CD8-positive, alpha-beta T cell (primary cell): ENCODE measurements at regions of chr20 and their contacts with region 1.

Region 1: DNA sequence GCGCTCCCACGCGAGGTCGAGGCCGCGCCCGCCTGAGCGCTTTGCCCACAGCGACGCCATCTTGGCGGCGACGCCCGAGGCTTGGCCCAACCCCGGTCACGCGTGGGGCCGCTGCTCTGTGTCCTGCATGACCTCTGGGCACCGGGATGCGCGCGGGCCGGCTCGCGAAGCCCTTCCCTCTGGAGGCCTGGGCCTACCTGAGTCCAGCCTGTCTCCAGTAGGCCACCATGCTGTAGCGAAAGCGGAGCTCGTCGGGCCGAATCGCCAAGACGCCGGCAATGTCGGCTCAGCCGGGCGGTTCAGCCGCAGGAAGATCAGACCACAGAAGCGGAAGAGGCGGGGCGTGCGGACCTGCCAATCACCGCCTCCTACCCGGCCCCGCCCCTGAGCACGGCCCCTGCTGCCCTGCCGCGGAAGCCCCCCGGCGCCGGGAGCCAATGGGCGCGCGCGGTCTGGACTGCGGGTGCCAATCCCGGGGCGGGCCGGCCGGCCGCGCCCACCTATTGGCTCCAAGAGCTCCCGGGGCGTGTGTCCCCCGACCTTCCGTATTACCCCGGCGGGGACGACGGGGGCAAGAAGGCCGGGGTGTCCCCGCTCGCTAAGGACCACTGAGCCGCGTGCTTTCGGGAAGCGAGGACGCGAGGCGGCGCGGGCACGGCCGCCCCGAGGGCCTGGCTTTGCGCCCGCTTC is at the start of gene ATP5F1E:
- DNase-seq: peak; percentile 95 to 99 (median 98)
- ATAC-seq: peak; percentile 97
- H3K4me3 ChIP-seq: peak within 1 kb of the TSS; percentile 75 to 89
- H3K4me3 Mint-ChIP-seq: peak within 1 kb of the TSS; percentile 95
- H3K27ac ChIP-seq: peak within 1 kb of the TSS; percentile 67 to 79
- H3K27ac Mint-ChIP-seq: peak within 1 kb of the TSS; percentile 95
- H3K4me1 ChIP-seq: peaks cover 56% of the 10 kb centered on the region
- H3K4me1 Mint-ChIP-seq: peaks cover 60% of the 10 kb centered on the region
- H3K27me3 ChIP-seq: no peaks in the 10 kb centered on the region
- H3K27me3 Mint-ChIP-seq: no peaks in the 10 kb centered on the region
- CTCF ChIP-seq: no peak
- total RNA-seq, gene ATP5F1E: 50.4 to 52.2 TPM

Region 2: DNA sequence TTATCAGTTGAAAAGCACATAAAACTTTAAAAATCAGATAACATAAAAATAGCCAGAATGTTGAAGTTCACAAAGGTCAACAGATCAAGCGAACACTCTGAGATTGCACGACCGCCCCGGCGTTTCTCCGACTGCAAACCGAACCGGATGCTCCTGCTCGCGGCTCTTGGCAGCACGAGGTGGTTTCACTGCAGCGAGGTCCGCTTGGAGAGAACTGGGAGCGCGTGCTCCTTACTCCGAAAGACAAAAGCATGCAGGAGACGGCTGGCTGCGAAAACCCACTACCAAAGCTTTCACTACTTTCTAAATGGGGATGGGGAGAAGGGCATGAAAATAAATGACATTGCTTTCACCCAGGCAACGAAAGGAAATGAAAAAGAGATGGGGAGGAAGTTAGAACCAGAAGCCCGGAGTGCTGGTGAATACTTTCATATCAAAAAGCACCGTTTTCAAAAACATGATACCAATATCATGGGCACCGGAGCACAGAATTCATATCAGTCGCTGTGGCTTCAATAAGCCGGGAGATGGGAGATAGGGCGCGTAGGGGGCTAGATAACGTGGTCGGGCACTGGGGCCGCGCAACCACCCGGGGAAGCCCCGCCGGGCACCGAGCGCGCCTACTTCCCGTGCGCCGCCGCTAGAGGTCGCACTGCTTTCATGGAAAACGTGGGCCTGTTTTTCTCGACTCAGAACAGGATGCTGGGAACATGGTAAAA is 795.4 kb before region 1 on chr20:
- CTCF ChIA-PET with region 1: no interaction called
- POLR2A ChIA-PET with region 1: no interaction called
- intact Hi-C with region 1: loop called in 1 of 2 experiments (anchors 10 kb)
- DNase-seq: peak; percentile 70 to 91 (median 82)
- ATAC-seq: peak; percentile 87
- H3K4me3 ChIP-seq: peak overlapping the region; percentile 53 to 85
- H3K4me3 Mint-ChIP-seq: peak overlapping the region; percentile 86
- H3K27ac ChIP-seq: peak overlapping the region; percentile 56 to 73
- H3K27ac Mint-ChIP-seq: peak overlapping the region; percentile 89
- H3K4me1 ChIP-seq: peaks cover 7% of the 10 kb centered on the region
- H3K4me1 Mint-ChIP-seq: peaks cover 19% of the 10 kb centered on the region
- H3K27me3 ChIP-seq: no peaks in the 10 kb centered on the region
- H3K27me3 Mint-ChIP-seq: no peaks in the 10 kb centered on the region
- CTCF ChIP-seq: peak; percentile 96

Region 3: GRCh38 chr20:58388882-58389323 is 643.3 kb before region 1 on chr20 and contains the start of gene VAPB:
- CTCF ChIA-PET with region 1: no interaction called
- POLR2A ChIA-PET with region 1: no interaction called
- intact Hi-C with region 1: loop called (anchors 1 to 5 kb)
- DNase-seq: peak; percentile 94 to 99 (median 97)
- ATAC-seq: peak; percentile 95
- H3K4me3 ChIP-seq: peak within 1 kb of the TSS; percentile 87 to 90
- H3K4me3 Mint-ChIP-seq: peak within 1 kb of the TSS; percentile 88
- H3K27ac ChIP-seq: peak within 1 kb of the TSS; percentile 98 to 99
- H3K27ac Mint-ChIP-seq: peak within 1 kb of the TSS; percentile 96
- H3K4me1 ChIP-seq: peaks cover 43% of the 10 kb centered on the region
- H3K4me1 Mint-ChIP-seq: peaks cover 40% of the 10 kb centered on the region
- H3K27me3 ChIP-seq: peaks cover 0 to 2% of the 10 kb centered on the region in 2 experiments
- H3K27me3 Mint-ChIP-seq: peaks cover 4% of the 10 kb centered on the region
- CTCF ChIP-seq: no peak
- total RNA-seq, gene VAPB: 29.3 to 32.3 TPM

Region 4: GRCh38 chr20:58778760-58779159 is 253.4 kb before region 1 on chr20:
- CTCF ChIA-PET with region 1: no interaction called
- POLR2A ChIA-PET with region 1: no interaction called
- intact Hi-C with region 1: no loop called
- DNase-seq: no peak
- ATAC-seq: no peak
- H3K4me3 ChIP-seq: no peak overlapping the region
- H3K4me3 Mint-ChIP-seq: no peak overlapping the region
- H3K27ac ChIP-seq: no peak overlapping the region
- H3K27ac Mint-ChIP-seq: no peak overlapping the region
- H3K4me1 ChIP-seq: no peaks in the 10 kb centered on the region
- H3K4me1 Mint-ChIP-seq: no peaks in the 10 kb centered on the region
- H3K27me3 ChIP-seq: no peaks in the 10 kb centered on the region
- H3K27me3 Mint-ChIP-seq: peaks cover 5% of the 10 kb centered on the region
- CTCF ChIP-seq: no peak

Region 5: GRCh38 chr20:58864350-58864749 is 167.8 kb before region 1 on chr20:
- CTCF ChIA-PET with region 1: no interaction called
- POLR2A ChIA-PET with region 1: no interaction called
- intact Hi-C with region 1: no loop called
- DNase-seq: peak in 2 of 9 experiments; percentile 43 to 58
- ATAC-seq: peak; percentile 49
- H3K4me3 ChIP-seq: no peak overlapping the region
- H3K4me3 Mint-ChIP-seq: no peak overlapping the region
- H3K27ac ChIP-seq: no peak overlapping the region
- H3K27ac Mint-ChIP-seq: no peak overlapping the region
- H3K4me1 ChIP-seq: no peaks in the 10 kb centered on the region
- H3K4me1 Mint-ChIP-seq: no peaks in the 10 kb centered on the region
- H3K27me3 ChIP-seq: no peaks in the 10 kb centered on the region
- H3K27me3 Mint-ChIP-seq: peaks cover 18% of the 10 kb centered on the region
- CTCF ChIP-seq: peak; percentile 53

Region 6: GRCh38 chr20:58907399-58908137 is 124.6 kb before region 1 on chr20:
- CTCF ChIA-PET with region 1: no interaction called
- POLR2A ChIA-PET with region 1: interaction called, 12 read pairs
- intact Hi-C with region 1: no loop called
- DNase-seq: peak; percentile 26 to 90 (median 55)
- ATAC-seq: peak; percentile 48
- H3K4me3 ChIP-seq: peak overlapping the region in 1 of 2 experiments; percentile 2
- H3K4me3 Mint-ChIP-seq: peak overlapping the region; percentile 71
- H3K27ac ChIP-seq: peak overlapping the region; percentile 1 to 58
- H3K27ac Mint-ChIP-seq: peak overlapping the region; percentile 84
- H3K4me1 ChIP-seq: peaks cover 38% of the 10 kb centered on the region
- H3K4me1 Mint-ChIP-seq: peaks cover 72% of the 10 kb centered on the region
- H3K27me3 ChIP-seq: no peaks in the 10 kb centered on the region
- H3K27me3 Mint-ChIP-seq: no peaks in the 10 kb centered on the region
- CTCF ChIP-seq: no peak

Region 7: DNA sequence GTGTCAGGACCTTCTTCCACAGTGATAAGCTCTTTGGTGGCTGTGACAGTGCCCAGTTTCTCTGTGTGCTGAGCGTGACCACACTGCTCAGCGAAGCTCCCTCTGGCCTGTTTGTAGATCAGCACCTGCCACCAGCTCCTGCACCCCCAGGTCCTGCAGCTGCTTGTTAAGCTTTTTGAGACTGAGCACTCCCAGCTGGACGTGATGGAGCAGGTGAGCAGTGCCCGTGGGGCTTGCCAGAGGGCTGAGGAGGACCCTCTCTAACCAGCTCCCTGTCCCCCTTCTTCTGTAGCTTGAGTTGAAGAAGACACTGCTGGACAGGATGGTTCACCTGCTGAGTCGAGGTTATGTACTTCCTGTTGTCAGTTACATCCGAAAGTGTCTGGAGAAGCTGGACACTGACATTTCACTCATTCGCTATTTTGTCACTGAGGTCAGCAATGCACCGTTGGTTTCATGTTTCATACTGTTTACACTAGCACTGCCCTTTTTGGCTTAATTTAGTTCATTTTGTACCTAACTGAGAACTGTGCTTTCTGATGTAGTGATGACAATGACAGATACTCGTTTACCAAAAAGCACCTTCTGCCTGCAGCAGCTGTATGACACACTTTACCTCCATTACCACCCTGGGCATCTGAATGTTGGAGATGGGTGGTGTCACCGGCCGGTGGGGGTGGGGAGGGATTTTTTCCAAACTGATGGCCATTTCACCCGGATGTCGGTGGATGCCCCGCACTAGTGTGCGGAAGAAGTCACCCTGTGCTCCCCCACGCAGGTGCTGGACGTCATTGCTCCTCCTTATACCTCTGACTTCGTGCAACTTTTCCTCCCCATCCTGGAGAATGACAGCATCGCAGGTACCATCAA is 38.6 kb before region 1 on chr20:
- CTCF ChIA-PET with region 1: no interaction called
- POLR2A ChIA-PET with region 1: no interaction called
- intact Hi-C with region 1: no loop called
- DNase-seq: no peak
- ATAC-seq: no peak
- H3K4me3 ChIP-seq: no peak overlapping the region
- H3K4me3 Mint-ChIP-seq: no peak overlapping the region
- H3K27ac ChIP-seq: no peak overlapping the region
- H3K27ac Mint-ChIP-seq: peak overlapping the region; percentile 37
- H3K4me1 ChIP-seq: no peaks in the 10 kb centered on the region
- H3K4me1 Mint-ChIP-seq: no peaks in the 10 kb centered on the region
- H3K27me3 ChIP-seq: no peaks in the 10 kb centered on the region
- H3K27me3 Mint-ChIP-seq: no peaks in the 10 kb centered on the region
- CTCF ChIP-seq: no peak

Region 8: DNA sequence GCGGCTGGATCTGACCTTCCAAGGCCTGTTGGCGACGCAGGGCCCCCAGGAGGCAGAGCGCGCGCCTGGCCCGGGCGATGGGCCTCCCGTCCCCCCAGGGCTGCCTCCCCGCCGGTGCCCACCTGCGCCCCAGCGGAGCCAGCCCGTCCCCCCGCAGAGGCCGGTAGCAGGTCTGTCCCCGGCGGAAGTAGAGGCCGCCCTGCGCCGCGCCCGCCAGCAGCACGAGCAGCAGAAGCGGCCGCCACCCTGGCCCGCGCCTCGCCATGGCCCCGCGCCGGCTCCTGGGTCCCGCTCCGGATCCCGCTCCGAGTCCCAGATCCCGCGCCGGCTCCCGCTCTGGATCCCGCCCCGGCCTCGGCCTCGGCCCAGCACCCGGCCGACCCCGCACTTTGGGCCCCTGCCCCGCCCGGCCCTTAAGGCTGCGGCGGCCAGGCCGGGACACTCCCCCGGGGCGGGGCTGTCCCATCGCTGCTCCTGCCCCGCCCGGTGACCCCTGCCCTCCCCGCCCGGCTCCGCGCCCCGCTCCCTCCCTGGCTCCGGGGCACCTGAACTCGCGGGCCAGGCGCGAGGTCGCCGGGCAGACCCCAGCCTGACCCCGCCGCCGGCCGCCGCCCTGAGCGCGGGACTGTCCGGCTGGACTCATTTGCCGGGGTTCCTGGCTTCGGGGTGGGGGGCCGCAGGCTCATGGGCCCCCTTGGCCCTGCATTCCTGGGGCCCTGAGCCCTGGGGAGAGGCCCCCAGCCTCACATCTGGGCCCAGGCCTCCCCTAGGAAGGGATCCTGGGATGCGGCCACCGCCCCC is 25.1 kb before region 1 on chr20 and contains the start of gene CTSZ:
- CTCF ChIA-PET with region 1: interaction called, 5 read pairs
- POLR2A ChIA-PET with region 1: interaction called, 7 read pairs
- intact Hi-C with region 1: loop called in 1 of 2 experiments (anchors 2 kb)
- DNase-seq: peak in 6 of 9 experiments; percentile 28 to 69 (median 48)
- ATAC-seq: peak; percentile 54
- H3K4me3 ChIP-seq: peak within 1 kb of the TSS; percentile 48 to 60
- H3K4me3 Mint-ChIP-seq: peak within 1 kb of the TSS; percentile 72
- H3K27ac ChIP-seq: no peak within 1 kb of the TSS
- H3K27ac Mint-ChIP-seq: no peak within 1 kb of the TSS
- H3K4me1 ChIP-seq: peaks cover 36% of the 10 kb centered on the region
- H3K4me1 Mint-ChIP-seq: peaks cover 35% of the 10 kb centered on the region
- H3K27me3 ChIP-seq: no peaks in the 10 kb centered on the region
- H3K27me3 Mint-ChIP-seq: no peaks in the 10 kb centered on the region
- CTCF ChIP-seq: no peak
- total RNA-seq, gene CTSZ: 5.1 to 7.0 TPM

Region 9: GRCh38 chr20:59165891-59166709 is 133.9 kb after region 1 on chr20:
- CTCF ChIA-PET with region 1: interaction called, 3 read pairs
- POLR2A ChIA-PET with region 1: interaction called, 3 read pairs
- intact Hi-C with region 1: loop called in 1 of 2 experiments (anchors 5 kb)
- DNase-seq: peak in 4 of 9 experiments; percentile 20 to 79 (median 60)
- ATAC-seq: peak; percentile 64
- H3K4me3 ChIP-seq: peak overlapping the region; percentile 59 to 62
- H3K4me3 Mint-ChIP-seq: peak overlapping the region; percentile 84
- H3K27ac ChIP-seq: peak overlapping the region; percentile 93 to 95
- H3K27ac Mint-ChIP-seq: peak overlapping the region; percentile 93
- H3K4me1 ChIP-seq: peaks cover 85% of the 10 kb centered on the region
- H3K4me1 Mint-ChIP-seq: peaks cover 93% of the 10 kb centered on the region
- H3K27me3 ChIP-seq: no peaks in the 10 kb centered on the region
- H3K27me3 Mint-ChIP-seq: no peaks in the 10 kb centered on the region
- CTCF ChIP-seq: no peak

Region 10: GRCh38 chr20:59253779-59254319 is 221.7 kb after region 1 on chr20:
- CTCF ChIA-PET with region 1: no interaction called
- POLR2A ChIA-PET with region 1: no interaction called
- intact Hi-C with region 1: loop called in 1 of 2 experiments (anchors 1 kb)
- DNase-seq: peak in 7 of 9 experiments; percentile 26 to 70 (median 40)
- ATAC-seq: peak; percentile 61
- H3K4me3 ChIP-seq: peak overlapping the region in 1 of 2 experiments; percentile 18
- H3K4me3 Mint-ChIP-seq: peak overlapping the region; percentile 75
- H3K27ac ChIP-seq: peak overlapping the region; percentile 57 to 59
- H3K27ac Mint-ChIP-seq: peak overlapping the region; percentile 98
- H3K4me1 ChIP-seq: peaks cover 53% of the 10 kb centered on the region
- H3K4me1 Mint-ChIP-seq: peaks cover 74% of the 10 kb centered on the region
- H3K27me3 ChIP-seq: no peaks in the 10 kb centered on the region
- H3K27me3 Mint-ChIP-seq: no peaks in the 10 kb centered on the region
- CTCF ChIP-seq: no peak